ENCODE measurements at regions of chr6 and their contacts with region 1.

Region 1: DNA sequence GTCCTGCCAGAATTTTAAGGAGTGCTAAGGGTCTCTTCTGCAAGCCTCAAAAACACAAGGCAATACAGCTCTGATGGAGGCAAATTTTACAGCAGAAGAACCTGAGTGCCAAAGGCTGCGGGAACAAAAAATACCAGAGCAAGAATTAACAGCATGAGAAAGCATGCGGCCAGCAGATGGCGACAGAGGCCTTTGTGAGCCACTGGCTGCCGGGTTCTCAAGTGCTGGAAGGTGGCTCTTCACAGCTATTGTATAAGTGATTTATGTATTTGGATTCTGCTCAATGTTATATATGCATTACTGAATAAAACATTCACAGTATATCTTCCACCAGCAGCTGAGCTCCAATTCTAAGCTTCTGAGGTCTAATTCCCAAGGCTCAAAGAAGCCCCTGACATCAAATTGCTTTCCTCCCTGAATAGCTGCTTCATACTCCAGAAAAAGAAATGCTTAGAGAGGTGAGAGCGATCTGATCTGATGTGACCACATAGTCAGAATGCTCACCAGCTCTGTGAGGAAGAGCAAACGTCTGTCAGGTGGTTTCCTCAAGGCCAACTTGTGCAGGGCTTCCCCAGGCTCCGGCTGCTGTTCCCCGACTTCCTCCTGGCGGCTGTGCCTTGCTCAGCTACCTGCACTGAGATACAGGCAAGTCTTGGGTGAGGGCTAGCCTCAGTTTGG is 58.6 kb downstream of the PPP1R3G start:
- DNase-seq: peak; percentile 27 to 92
- H3K4me3 ChIP-seq: no peak overlapping the region
- H3K27ac ChIP-seq: no peak overlapping the region
- H3K4me1 ChIP-seq: peaks cover 0 to 4% (median 0%) of the 10 kb centered on the region in 4 experiments; a peak in 3 of 7 replicates
- H3K27me3 ChIP-seq: no peaks in the 10 kb centered on the region; a peak in 1 of 7 replicates
- CTCF ChIP-seq: peak; percentile 83 to 92 (median 88)
- EP300 ChIP-seq: no peak
- POLR2A ChIP-seq: no peak
- RAD21 ChIP-seq: peak; percentile 91

Region 2: DNA sequence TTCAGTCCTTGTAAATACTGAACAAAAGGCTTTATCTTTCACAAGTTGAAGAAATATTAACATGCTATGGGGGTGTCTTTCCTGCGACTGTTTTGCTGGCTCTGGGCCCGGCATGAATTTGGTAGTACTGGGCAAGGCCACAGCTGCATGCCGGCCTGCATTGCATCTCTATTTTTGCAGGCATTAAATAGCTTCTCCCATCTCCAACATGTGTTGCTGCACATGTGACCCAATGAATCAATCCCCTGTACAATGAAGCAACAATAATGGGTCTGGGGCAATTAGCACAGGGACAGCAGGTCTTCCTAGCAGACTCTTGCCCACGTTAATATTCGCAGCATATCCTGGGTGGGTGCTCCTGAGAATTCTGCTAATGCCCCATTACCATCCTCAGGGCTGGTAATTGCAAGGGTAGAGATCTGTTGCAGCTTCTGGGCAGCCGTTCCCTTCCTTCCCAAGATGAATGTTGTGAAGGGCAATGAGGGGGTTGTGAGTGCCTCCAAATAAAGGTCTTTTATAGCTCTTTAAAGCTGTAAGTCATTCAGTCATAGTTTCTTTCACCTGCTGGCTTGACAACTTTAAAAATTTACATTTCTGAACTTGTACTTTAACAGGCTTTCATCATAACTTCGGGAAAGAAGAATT is 391.8 kb before region 1 on chr6:
- CTCF ChIA-PET with region 1: no interaction called
- POLR2A ChIA-PET with region 1: no interaction called
- DNase-seq: no peak
- H3K4me3 ChIP-seq: no peak overlapping the region
- H3K27ac ChIP-seq: no peak overlapping the region
- H3K4me1 ChIP-seq: peaks cover 0 to 6% (median 4%) of the 10 kb centered on the region in 4 experiments; a peak in 4 of 7 replicates
- H3K27me3 ChIP-seq: peaks cover 0 to 10% (median 0%) of the 10 kb centered on the region in 4 experiments; a peak in 3 of 7 replicates
- CTCF ChIP-seq: no peak
- EP300 ChIP-seq: no peak
- POLR2A ChIP-seq: no peak
- RAD21 ChIP-seq: no peak

Region 3: DNA sequence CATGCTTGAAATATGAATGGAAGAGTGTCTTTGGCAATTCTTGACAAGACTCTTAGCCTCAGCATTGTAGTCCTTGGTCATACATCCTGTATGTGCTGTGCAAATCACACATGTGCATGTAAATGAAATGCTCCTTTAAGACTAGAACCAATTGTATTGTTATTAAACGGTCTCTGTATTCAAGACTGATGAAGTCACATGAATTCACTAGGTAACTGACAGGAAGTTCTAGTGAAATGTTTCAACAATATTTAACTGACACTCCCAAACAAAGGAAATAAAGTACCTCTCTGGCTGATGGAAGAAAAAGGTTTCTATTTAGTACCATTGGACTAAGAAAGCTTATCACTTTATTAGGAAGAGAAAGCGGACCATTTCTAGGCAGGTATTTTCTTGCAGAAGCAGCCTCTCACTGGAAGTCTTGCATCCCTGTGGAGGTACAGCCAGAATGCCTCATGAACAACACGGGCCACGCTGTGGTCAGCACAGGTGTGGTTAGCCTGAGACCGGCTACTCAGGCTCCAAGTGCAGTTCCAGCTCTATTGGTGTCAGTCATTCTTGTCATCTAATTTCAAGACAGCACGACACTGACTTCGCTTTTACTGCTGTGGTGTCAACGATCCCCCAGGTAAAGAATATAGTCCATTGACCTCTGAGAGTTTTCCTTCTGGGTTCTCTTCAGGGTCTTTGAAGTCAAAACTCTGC is 41.4 kb before region 1 on chr6:
- CTCF ChIA-PET with region 1: no interaction called
- POLR2A ChIA-PET with region 1: no interaction called
- DNase-seq: no peak
- H3K4me3 ChIP-seq: no peak overlapping the region
- H3K27ac ChIP-seq: no peak overlapping the region
- H3K4me1 ChIP-seq: no peaks in the 10 kb centered on the region; a peak in 1 of 7 replicates
- H3K27me3 ChIP-seq: no peaks in the 10 kb centered on the region; a peak in 1 of 7 replicates
- CTCF ChIP-seq: no peak
- EP300 ChIP-seq: no peak
- POLR2A ChIP-seq: no peak
- RAD21 ChIP-seq: no peak

Region 4: GRCh38 chr6:5167501-5167900 is 23.7 kb after region 1 on chr6:
- CTCF ChIA-PET with region 1: interaction called, 256 read pairs
- POLR2A ChIA-PET with region 1: no interaction called
- DNase-seq: no peak
- H3K4me3 ChIP-seq: no peak overlapping the region
- H3K27ac ChIP-seq: no peak overlapping the region
- H3K4me1 ChIP-seq: peaks cover 0 to 3% (median 0%) of the 10 kb centered on the region in 4 experiments; a peak in 2 of 7 replicates
- H3K27me3 ChIP-seq: no peaks in the 10 kb centered on the region
- CTCF ChIP-seq: no peak
- EP300 ChIP-seq: no peak
- POLR2A ChIP-seq: no peak
- RAD21 ChIP-seq: no peak

Region 5: GRCh38 chr6:5190507-5190906 is 46.7 kb after region 1 on chr6:
- CTCF ChIA-PET with region 1: interaction called, 256 read pairs
- POLR2A ChIA-PET with region 1: no interaction called
- DNase-seq: no peak
- H3K4me3 ChIP-seq: no peak overlapping the region
- H3K27ac ChIP-seq: no peak overlapping the region
- H3K4me1 ChIP-seq: peaks cover 0 to 5% (median 3%) of the 10 kb centered on the region in 4 experiments; a peak in 4 of 7 replicates
- H3K27me3 ChIP-seq: no peaks in the 10 kb centered on the region
- CTCF ChIP-seq: no peak
- EP300 ChIP-seq: no peak
- POLR2A ChIP-seq: no peak
- RAD21 ChIP-seq: no peak

Region 6: GRCh38 chr6:5205877-5206850 is 62.4 kb after region 1 on chr6:
- CTCF ChIA-PET with region 1: interaction called, 91 read pairs
- POLR2A ChIA-PET with region 1: no interaction called
- DNase-seq: no peak
- H3K4me3 ChIP-seq: no peak overlapping the region
- H3K27ac ChIP-seq: no peak overlapping the region
- H3K4me1 ChIP-seq: peaks cover 0 to 11% (median 4%) of the 10 kb centered on the region in 4 experiments; a peak in 5 of 7 replicates
- H3K27me3 ChIP-seq: no peaks in the 10 kb centered on the region
- CTCF ChIP-seq: no peak
- EP300 ChIP-seq: no peak
- POLR2A ChIP-seq: no peak
- RAD21 ChIP-seq: no peak

Region 7: GRCh38 chr6:5302995-5303622 is 159.3 kb after region 1 on chr6:
- CTCF ChIA-PET with region 1: interaction called, 17 read pairs
- POLR2A ChIA-PET with region 1: no interaction called
- DNase-seq: peak in 1 of 2 experiments; percentile 68
- H3K4me3 ChIP-seq: no peak overlapping the region
- H3K27ac ChIP-seq: no peak overlapping the region
- H3K4me1 ChIP-seq: no peaks in the 10 kb centered on the region; a peak in 1 of 7 replicates
- H3K27me3 ChIP-seq: no peaks in the 10 kb centered on the region
- CTCF ChIP-seq: peak; percentile 72 to 97 (median 93)
- EP300 ChIP-seq: no peak
- POLR2A ChIP-seq: no peak
- RAD21 ChIP-seq: peak; percentile 69 to 74

Region 8: DNA sequence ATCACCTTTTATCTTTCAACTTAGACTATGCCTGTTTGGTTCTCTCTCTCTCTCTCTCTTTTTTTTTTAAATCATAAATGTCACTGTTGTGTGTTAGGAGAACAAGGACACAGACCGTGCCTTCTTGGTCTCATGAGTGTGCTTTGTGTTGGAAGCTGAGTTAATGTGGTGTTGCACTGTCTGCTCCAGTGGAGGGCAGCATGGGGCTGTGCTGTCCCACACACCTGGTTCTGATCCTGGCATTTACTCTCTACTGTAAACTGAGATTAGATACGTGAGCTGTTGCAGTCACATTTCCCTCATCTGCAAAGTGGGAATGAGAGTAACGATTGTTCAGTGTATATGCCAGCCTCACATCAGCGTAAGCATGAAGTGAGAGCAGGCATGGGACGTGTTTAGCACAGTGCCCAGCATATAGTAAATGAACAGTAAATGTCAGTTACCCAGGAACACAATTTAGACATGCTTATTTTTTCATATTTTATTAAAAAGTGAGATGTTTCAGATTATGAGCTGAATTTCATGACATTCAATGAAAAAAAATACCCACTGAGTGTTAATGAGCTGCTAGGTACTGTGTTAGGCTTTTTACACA is 278.6 kb after region 1 on chr6:
- CTCF ChIA-PET with region 1: no interaction called
- POLR2A ChIA-PET with region 1: no interaction called
- DNase-seq: peak; percentile 38 to 57
- H3K4me3 ChIP-seq: no peak overlapping the region
- H3K27ac ChIP-seq: no peak overlapping the region
- H3K4me1 ChIP-seq: peaks cover 0 to 2% (median 0%) of the 10 kb centered on the region in 4 experiments; a peak in 1 of 7 replicates
- H3K27me3 ChIP-seq: no peaks in the 10 kb centered on the region
- CTCF ChIP-seq: peak; percentile 76 to 94 (median 94)
- EP300 ChIP-seq: no peak
- POLR2A ChIP-seq: no peak
- RAD21 ChIP-seq: peak; percentile 95 to 97

Region 9: DNA sequence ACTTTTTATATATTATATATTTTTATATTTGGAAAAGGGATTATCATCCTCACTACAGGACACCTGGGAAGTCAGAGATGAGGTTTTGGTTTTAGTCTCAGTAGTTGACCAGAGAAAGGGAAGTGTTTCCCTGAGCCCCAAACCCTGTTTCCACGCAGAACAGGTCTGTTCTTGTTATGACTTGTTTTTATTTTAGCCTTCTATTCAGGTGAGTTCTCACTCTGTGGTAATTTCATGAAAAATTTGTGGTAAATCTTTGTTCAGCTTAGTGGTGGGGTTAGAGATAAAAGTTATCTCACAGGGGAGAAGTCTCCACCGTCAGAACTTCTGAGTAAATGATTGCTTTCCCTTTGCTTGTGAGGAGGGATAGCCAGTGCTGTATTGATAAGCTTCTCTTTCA is 342.4 kb after region 1 on chr6:
- CTCF ChIA-PET with region 1: no interaction called
- POLR2A ChIA-PET with region 1: no interaction called
- DNase-seq: no peak
- H3K4me3 ChIP-seq: no peak overlapping the region
- H3K27ac ChIP-seq: no peak overlapping the region
- H3K4me1 ChIP-seq: no peaks in the 10 kb centered on the region
- H3K27me3 ChIP-seq: no peaks in the 10 kb centered on the region; a peak in 1 of 7 replicates
- CTCF ChIP-seq: no peak
- EP300 ChIP-seq: no peak
- POLR2A ChIP-seq: no peak
- RAD21 ChIP-seq: no peak